ENCODE measurements at regions of chr7 and their contacts with region 1.

Region 1: DNA sequence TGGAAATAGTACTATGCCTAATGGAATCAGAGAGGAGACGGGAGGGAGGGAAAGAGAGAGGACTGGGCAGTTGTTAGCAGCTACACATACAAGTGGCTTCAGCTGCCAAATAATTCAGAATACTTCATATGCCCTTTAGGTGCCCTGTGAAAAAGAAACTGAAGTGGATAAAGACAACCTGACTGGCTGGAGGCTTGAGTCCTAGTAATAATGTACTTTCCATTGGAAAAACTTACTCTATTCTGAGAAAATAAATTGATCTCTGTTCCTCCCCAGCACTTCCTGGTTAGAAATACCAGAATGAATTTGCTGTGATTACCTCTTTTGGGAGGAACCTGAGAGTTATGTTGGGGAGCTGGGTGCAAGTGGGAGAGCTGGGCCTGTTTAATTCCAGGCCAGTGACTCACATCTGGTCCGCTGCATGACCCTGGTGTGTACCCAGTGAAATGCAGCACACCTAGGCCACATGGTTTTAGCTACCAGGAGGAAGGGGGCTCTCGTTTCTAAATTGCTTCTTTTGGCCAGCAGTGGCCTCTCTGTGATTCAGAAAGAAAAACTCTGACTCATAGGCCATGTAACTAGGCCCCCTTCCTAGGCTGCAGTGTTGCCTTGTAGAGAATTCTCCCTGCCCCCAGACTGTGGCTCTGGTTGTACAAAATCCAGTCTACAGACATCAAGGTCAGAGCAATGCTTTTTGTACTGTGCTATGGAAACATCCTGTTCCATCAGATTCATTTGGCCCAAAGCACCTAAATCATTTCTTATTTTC is 6.5 kb downstream of the AGFG2 start:
- DNase-seq: peak; percentile 92
- H3K4me3 ChIP-seq: peak overlapping the region in 1 of 3 experiments; percentile 2
- H3K27ac ChIP-seq: peak overlapping the region; percentile 94
- H3K4me1 ChIP-seq: peaks cover 52% of the 10 kb centered on the region
- H3K27me3 ChIP-seq: no peaks in the 10 kb centered on the region
- CTCF ChIP-seq: peak; percentile 9 to 21
- POLR2A ChIP-seq: peak; percentile 61

Region 2: GRCh38 chr7:100190048-100190711 is 355.4 kb before region 1 on chr7:
- CTCF ChIA-PET with region 1: no interaction called
- POLR2A ChIA-PET with region 1: no interaction called
- dilution Hi-C with region 1: no loop called
- intact Hi-C with region 1: no loop called
- DNase-seq: no peak
- H3K4me3 ChIP-seq: no peak overlapping the region
- H3K27ac ChIP-seq: no peak overlapping the region
- H3K4me1 ChIP-seq: no peaks in the 10 kb centered on the region
- H3K27me3 ChIP-seq: peaks cover 3 to 9% of the 10 kb centered on the region in 2 experiments
- CTCF ChIP-seq: peak in 1 of 2 donors; percentile 14
- POLR2A ChIP-seq: no peak

Region 3: DNA sequence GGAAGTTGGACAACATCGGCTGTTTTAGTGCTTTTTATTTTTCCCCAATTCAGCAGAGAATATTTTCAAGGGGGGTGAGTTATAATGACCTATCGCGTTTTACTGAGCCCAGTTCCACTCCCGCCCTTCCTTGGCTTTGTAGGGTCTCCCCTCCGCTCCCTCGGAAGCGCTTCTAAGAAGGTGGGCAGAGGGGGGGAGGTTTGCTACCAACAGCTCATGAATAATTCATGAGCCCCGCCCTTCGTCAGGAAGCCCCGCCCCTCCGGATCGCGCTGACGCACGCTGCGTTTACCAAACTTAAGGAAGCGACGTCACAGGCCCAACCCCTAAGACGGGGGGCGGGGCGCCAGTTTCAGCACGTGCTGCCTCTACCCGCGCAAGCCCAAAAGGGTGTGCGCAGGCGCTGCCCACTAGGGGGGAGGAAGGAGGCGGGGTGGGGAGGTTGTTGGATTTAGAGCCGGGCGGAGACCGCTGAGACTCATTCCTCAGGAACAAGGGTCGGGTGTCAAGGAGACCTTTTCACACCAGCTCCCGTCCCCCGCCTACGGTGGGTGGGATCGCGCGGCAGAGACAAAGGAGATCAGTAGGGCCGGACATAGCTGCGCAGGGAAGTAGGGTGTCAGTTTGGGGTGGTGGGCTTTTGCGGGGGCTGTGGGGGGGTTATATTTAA is 116.4 kb before region 1 on chr7:
- CTCF ChIA-PET with region 1: no interaction called
- POLR2A ChIA-PET with region 1: interaction called, 6 read pairs
- dilution Hi-C with region 1: no loop called
- intact Hi-C with region 1: loop called (anchors 1 kb)
- DNase-seq: peak; percentile 100
- H3K4me3 ChIP-seq: peak overlapping the region; percentile 55 to 80 (median 69)
- H3K27ac ChIP-seq: peak overlapping the region; percentile 89
- H3K4me1 ChIP-seq: peaks cover 19% of the 10 kb centered on the region
- H3K27me3 ChIP-seq: no peaks in the 10 kb centered on the region
- CTCF ChIP-seq: no peak
- POLR2A ChIP-seq: peak; percentile 92

Measured in endothelial cell of umbilical vein (primary cell).